ENCODE measurements at regions of chr12 and their contacts with region 1.

Region 1: GRCh38 chr12:117857632-117858612 is 110.9 kb downstream of the KSR2 start:
- DNase-seq: peak; percentile 77
- CTCF ChIP-seq: peak; percentile 51

Region 2: DNA sequence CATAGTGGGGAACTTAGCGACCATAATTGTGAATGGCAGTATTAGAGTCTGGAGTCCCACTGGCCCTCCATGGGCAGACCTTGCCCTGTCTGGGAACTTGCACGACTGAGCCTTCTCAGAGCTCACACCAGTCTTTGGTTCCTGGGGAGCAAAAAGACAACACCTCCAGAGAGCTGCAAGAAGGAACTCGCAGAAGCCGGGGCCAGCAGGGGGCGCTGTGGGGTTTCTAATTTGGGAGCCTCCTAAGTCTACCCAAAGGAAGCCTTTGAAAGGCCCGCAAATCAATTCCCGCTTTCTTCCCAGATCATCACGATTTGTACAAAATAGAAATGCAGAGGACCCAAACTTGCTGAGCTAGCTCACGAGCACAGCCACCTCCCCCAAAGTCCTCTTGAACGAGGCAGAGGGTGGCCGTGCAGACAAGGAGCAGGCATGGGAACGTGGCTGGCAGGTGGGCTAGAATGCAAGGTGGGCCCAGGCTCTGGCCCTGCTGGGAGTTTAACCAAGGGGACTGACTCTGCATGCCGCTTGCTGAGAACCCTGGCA is 621.4 kb before region 1 on chr12:
- CTCF ChIA-PET with region 1: interaction called, 15 read pairs
- POLR2A ChIA-PET with region 1: no interaction called
- DNase-seq: peak; percentile 75
- CTCF ChIP-seq: peak; percentile 68

Region 3: DNA sequence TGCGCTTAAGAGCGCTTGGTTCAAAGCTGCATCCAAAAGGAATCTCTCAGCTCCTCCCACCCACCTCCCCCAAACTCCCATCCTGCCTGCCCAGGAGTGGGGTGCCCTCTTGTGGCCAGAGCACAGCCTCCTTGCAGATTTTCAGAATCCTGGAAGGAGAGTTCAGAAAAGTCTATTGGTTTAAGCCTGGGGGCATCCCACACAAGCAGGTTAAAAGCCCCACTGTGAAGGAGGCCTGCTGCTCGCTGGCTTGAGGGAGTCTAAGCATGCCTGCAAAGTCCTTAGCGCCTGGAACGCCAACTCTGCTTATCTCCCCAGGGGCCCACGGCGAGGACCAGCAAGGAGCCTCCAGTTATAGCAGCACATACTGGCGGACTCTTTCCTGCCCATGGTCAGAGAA is 186.2 kb before region 1 on chr12:
- CTCF ChIA-PET with region 1: no interaction called
- POLR2A ChIA-PET with region 1: no interaction called
- DNase-seq: peak; percentile 35
- CTCF ChIP-seq: peak; percentile 47

Region 4: GRCh38 chr12:117842630-117843029 is 15.3 kb before region 1 on chr12:
- CTCF ChIA-PET with region 1: interaction called, 45 read pairs
- POLR2A ChIA-PET with region 1: no interaction called
- DNase-seq: no peak
- CTCF ChIP-seq: no peak

Region 5: GRCh38 chr12:117874842-117875434 is 17.0 kb after region 1 on chr12:
- CTCF ChIA-PET with region 1: interaction called, 56 read pairs
- POLR2A ChIA-PET with region 1: no interaction called
- DNase-seq: peak; percentile 72
- CTCF ChIP-seq: peak; percentile 74

Region 6: DNA sequence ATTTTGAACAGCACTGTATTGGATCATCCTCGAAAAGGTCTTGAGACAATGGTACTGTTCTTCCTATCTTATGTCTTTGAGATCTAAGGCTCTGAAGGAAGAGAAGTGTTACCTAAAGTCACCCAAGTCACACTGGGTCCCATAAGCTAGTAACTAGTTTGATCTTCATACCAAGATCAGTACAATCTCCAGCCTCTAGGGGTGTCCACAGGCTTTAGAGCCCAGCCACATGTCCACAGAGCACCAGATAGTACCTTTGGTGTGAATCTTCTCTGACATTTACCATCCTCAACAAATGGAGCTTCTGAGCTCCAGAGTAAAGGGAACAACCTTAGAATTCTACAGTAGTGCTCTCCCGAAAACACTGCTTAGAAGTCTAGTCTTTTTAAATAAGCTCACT is 32.2 kb after region 1 on chr12:
- CTCF ChIA-PET with region 1: interaction called, 12 read pairs
- POLR2A ChIA-PET with region 1: no interaction called
- DNase-seq: no peak
- CTCF ChIP-seq: peak; percentile 5